ENCODE measurements at regions of chr9 and their contacts with region 1.

Region 1: DNA sequence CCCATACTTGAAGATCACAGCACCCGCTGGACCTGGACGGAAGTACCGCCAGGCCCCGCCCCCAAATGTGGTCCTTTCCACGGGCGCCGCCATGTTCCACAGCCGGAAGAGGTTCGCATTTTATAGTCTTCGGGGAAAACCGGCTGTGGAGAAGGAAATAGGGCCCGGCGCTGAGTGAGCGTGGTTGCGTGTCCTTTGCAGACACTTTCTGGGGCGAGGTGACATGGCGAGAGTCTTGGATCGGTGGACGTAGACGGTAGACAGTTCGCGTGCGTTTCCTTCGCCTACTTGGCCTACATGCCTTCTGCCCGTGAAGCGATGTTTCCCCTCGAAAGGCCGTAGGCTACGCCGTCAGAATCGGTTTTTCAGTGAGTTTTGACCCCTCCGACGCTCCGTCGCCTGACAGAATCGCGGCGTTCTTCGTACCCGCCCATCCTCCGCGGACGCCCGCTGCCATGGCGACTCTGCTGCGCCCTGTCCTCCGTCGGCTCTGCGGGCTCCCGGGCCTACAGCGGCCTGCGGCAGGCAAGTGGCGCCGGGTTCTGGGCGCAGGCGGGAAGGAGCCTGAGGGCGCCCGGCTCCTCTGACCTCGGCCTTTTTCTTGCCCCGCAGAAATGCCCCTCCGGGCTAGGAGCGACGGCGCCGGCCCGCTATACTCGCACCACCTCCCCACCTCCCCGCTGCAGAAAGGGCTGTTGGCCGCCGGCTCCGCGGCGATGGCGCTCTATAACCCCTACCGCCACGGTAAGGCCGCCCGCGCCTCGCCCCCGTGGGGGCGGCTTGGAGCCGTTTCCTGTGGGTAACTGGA is at the starts of genes COQ4 and TRUB2:
- DNase-seq: peak; percentile 89 to 96 (median 94)
- H3K4me3 ChIP-seq: peak within 1 kb of the TSS; percentile 68 to 100 (median 95)
- H3K27ac ChIP-seq: peak within 1 kb of the TSS; percentile 81 to 100 (median 98)
- H3K27me3 ChIP-seq: no peaks in the 10 kb centered on the region
- CTCF ChIP-seq: peak in 28 of 56 donors; percentile 2 to 57 (median 22)
- total RNA-seq, gene COQ4: 28.0 to 67.5 (median 47.0) TPM
- total RNA-seq, gene TRUB2: 20.6 to 66.5 (median 44.9) TPM

Region 2: GRCh38 chr9:128275996-128276573 is 46.5 kb before region 1 on chr9 and contains the starts of genes GOLGA2 and SWI5:
- intact Hi-C with region 1: loop called in 1 of 2 experiments (anchors 5 kb)
- DNase-seq: peak; percentile 98 to 99 (median 99)
- H3K4me3 ChIP-seq: peak within 1 kb of the TSS; percentile 63 to 98 (median 88)
- H3K27ac ChIP-seq: peak within 1 kb of the TSS in 58 of 59 donors; percentile 37 to 93 (median 80)
- H3K27me3 ChIP-seq: no peaks in the 10 kb centered on the region
- CTCF ChIP-seq: peak in 16 of 56 donors; percentile 8 to 46 (median 28)
- total RNA-seq, gene GOLGA2: 59.2 to 145 (median 94.1) TPM
- total RNA-seq, gene SWI5: 11.3 to 29.4 (median 16.7) TPM